CD8-positive, alpha-beta T cell (primary cell): ENCODE measurements at regions of chr7 and their contacts with region 1.

Region 1: GRCh38 chr7:97027427-97028234 is 3.0 kb upstream of the DLX5 start:
- DNase-seq: peak; percentile 42 to 78 (median 65)
- ATAC-seq: peak; percentile 64
- H3K4me3 ChIP-seq: peak overlapping the region; percentile 40 to 51
- H3K4me3 Mint-ChIP-seq: peak overlapping the region; percentile 81
- H3K27ac ChIP-seq: no peak overlapping the region
- H3K27ac Mint-ChIP-seq: no peak overlapping the region
- H3K4me1 ChIP-seq: peaks cover 29% of the 10 kb centered on the region
- H3K4me1 Mint-ChIP-seq: peaks cover 35% of the 10 kb centered on the region
- H3K27me3 ChIP-seq: peaks cover 24 to 40% of the 10 kb centered on the region in 2 experiments
- H3K27me3 Mint-ChIP-seq: peaks cover 62% of the 10 kb centered on the region
- CTCF ChIP-seq: peak; percentile 73

Region 2: GRCh38 chr7:95511716-95512260 is 1515.8 kb before region 1 on chr7:
- CTCF ChIA-PET with region 1: no interaction called
- POLR2A ChIA-PET with region 1: no interaction called
- intact Hi-C with region 1: loop called (anchors 5 kb)
- DNase-seq: peak in 8 of 9 experiments; percentile 13 to 62 (median 32)
- ATAC-seq: peak; percentile 58
- H3K4me3 ChIP-seq: no peak overlapping the region
- H3K4me3 Mint-ChIP-seq: no peak overlapping the region
- H3K27ac ChIP-seq: no peak overlapping the region
- H3K27ac Mint-ChIP-seq: no peak overlapping the region
- H3K4me1 ChIP-seq: no peaks in the 10 kb centered on the region
- H3K4me1 Mint-ChIP-seq: peaks cover 2% of the 10 kb centered on the region
- H3K27me3 ChIP-seq: no peaks in the 10 kb centered on the region
- H3K27me3 Mint-ChIP-seq: peaks cover 3% of the 10 kb centered on the region
- CTCF ChIP-seq: peak; percentile 64

Region 3: DNA sequence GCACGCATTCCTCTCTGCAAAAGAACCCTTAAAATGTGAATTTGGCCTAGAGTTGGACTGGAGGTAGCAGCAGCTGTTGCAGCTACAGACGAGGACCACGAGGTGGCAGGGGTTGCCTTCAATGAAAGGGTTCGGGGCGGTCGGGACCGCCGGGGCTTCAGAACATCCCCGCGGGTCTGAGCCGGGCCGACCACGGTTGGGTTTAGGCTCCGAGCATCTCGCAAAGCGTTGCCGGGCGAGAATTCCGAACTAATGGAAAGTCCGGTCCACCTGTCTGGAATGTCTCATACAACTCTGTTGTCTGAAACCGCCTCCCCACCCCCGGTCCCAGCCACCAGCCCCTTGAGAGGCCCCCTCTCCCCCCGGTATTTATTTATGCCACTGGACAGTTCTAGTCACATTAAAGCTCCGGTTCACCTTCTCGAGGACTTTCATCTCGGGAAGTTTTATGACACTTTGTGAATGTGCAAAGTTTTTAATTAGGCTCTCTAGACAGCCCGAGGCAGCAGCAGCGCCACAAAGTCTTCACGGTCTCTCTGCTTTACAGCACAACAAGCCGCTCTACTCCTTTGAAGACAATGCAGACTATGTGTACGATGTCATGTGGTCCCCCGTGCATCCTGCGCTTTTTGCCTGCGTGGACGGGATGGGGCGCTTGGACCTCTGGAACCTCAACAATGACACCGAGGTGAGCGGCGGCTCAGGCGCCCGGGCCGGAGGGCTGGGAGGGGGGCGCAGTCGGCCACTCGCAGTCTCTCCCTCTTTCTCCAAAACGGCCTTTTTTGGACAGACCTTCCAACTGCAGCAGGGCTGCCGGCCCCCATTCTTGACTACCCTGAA is 951.9 kb before region 1 on chr7:
- CTCF ChIA-PET with region 1: interaction called, 12 read pairs
- POLR2A ChIA-PET with region 1: no interaction called
- intact Hi-C with region 1: loop called in 1 of 2 experiments (anchors 1 kb)
- DNase-seq: peak; percentile 10 to 66 (median 45)
- ATAC-seq: peak; percentile 73
- H3K4me3 ChIP-seq: peak overlapping the region; percentile 43 to 60
- H3K4me3 Mint-ChIP-seq: peak overlapping the region; percentile 86
- H3K27ac ChIP-seq: no peak overlapping the region
- H3K27ac Mint-ChIP-seq: no peak overlapping the region
- H3K4me1 ChIP-seq: peaks cover 9% of the 10 kb centered on the region
- H3K4me1 Mint-ChIP-seq: peaks cover 10% of the 10 kb centered on the region
- H3K27me3 ChIP-seq: peaks cover 5 to 9% of the 10 kb centered on the region in 2 experiments
- H3K27me3 Mint-ChIP-seq: peaks cover 38% of the 10 kb centered on the region
- CTCF ChIP-seq: peak; percentile 74

Region 4: GRCh38 chr7:96224685-96225084 is 802.9 kb before region 1 on chr7:
- CTCF ChIA-PET with region 1: interaction called, 3 read pairs
- POLR2A ChIA-PET with region 1: no interaction called
- intact Hi-C with region 1: loop called in 1 of 2 experiments (anchors 5 kb)
- DNase-seq: peak in 2 of 9 experiments; percentile 10 to 20
- ATAC-seq: no peak
- H3K4me3 ChIP-seq: no peak overlapping the region
- H3K4me3 Mint-ChIP-seq: no peak overlapping the region
- H3K27ac ChIP-seq: no peak overlapping the region
- H3K27ac Mint-ChIP-seq: no peak overlapping the region
- H3K4me1 ChIP-seq: no peaks in the 10 kb centered on the region
- H3K4me1 Mint-ChIP-seq: no peaks in the 10 kb centered on the region
- H3K27me3 ChIP-seq: no peaks in the 10 kb centered on the region
- H3K27me3 Mint-ChIP-seq: no peaks in the 10 kb centered on the region
- CTCF ChIP-seq: no peak

Region 5: DNA sequence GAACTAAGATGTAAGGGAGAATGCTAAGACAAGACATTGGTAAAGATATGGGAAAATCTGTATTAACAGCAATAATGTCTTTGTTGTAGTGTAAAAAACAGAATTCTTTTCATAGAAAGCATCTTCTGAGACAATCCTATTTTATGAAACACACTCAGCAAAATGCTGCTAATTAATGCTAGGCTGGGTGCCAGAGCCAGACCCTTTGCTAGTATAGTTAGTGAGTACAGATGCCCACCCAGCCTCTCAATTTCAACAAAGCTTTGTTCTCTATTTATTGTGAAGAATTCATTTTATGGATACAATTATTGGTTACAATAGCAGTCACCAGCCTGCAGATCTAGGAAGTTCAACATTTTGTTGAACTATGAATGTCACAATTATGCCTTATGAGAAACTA is 449.0 kb before region 1 on chr7:
- CTCF ChIA-PET with region 1: no interaction called
- POLR2A ChIA-PET with region 1: no interaction called
- intact Hi-C with region 1: no loop called
- DNase-seq: no peak
- ATAC-seq: no peak
- H3K4me3 ChIP-seq: no peak overlapping the region
- H3K4me3 Mint-ChIP-seq: no peak overlapping the region
- H3K27ac ChIP-seq: no peak overlapping the region
- H3K27ac Mint-ChIP-seq: no peak overlapping the region
- H3K4me1 ChIP-seq: no peaks in the 10 kb centered on the region
- H3K4me1 Mint-ChIP-seq: no peaks in the 10 kb centered on the region
- H3K27me3 ChIP-seq: no peaks in the 10 kb centered on the region
- H3K27me3 Mint-ChIP-seq: peaks cover 8% of the 10 kb centered on the region
- CTCF ChIP-seq: no peak

Region 6: DNA sequence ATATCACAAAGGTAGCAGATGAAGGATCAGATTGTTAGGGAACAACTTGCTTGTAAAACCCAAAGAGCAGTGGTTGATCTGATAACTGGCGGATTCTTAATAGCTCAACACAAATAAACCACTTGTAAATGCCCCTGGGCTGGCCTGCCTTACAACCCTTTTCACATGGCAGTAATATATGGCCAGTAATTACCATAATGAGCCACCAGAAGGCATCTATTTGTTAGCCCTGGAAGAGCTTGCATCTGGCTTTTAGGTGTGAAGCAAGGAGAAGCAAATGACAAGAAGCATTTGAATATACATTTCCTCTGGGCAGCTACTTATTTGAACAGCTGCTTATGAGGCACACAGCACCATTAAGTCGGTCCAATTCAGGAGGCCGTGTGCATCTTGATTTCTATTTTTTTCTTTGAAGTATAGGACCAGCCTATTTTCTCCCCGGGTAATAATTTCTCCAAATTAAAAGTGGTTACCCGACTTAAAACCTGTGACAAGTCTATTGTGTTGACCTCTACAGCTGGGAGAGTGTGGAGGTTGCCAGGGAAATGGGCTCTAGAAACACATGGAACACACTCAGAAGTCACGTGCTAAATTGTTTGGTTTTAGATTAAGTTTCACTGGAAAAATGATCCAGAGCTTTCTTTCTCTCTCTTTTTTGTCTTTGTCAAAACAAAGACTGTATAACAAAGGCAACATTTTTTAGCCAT is 431.4 kb before region 1 on chr7:
- CTCF ChIA-PET with region 1: no interaction called
- POLR2A ChIA-PET with region 1: no interaction called
- intact Hi-C with region 1: loop called in 1 of 2 experiments (anchors 5 kb)
- DNase-seq: peak in 1 of 9 experiments; percentile 7
- ATAC-seq: no peak
- H3K4me3 ChIP-seq: no peak overlapping the region
- H3K4me3 Mint-ChIP-seq: no peak overlapping the region
- H3K27ac ChIP-seq: no peak overlapping the region
- H3K27ac Mint-ChIP-seq: no peak overlapping the region
- H3K4me1 ChIP-seq: no peaks in the 10 kb centered on the region
- H3K4me1 Mint-ChIP-seq: no peaks in the 10 kb centered on the region
- H3K27me3 ChIP-seq: no peaks in the 10 kb centered on the region
- H3K27me3 Mint-ChIP-seq: peaks cover 15% of the 10 kb centered on the region
- CTCF ChIP-seq: no peak

Region 7: DNA sequence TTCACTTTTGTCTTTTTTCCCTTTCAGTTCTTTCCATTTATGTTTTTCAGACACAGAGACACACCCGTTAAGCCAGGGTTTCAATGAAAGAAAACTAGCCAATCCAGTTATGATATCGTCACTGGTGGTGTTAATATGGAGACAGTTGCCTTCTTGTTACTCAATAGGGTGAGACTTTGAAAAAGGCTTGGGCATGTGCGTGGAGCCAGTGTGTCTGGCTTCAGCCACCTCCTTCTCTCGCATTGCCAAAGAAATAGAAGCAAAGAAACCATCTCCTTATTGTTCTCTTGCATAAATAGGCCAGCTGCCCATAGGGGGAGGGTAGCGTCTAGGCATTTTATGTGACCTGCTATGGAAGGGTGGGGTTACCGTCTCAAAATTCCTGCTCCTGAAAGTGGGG is 106.4 kb before region 1 on chr7:
- CTCF ChIA-PET with region 1: no interaction called
- POLR2A ChIA-PET with region 1: no interaction called
- intact Hi-C with region 1: no loop called
- DNase-seq: no peak
- ATAC-seq: no peak
- H3K4me3 ChIP-seq: no peak overlapping the region
- H3K4me3 Mint-ChIP-seq: no peak overlapping the region
- H3K27ac ChIP-seq: no peak overlapping the region
- H3K27ac Mint-ChIP-seq: no peak overlapping the region
- H3K4me1 ChIP-seq: no peaks in the 10 kb centered on the region
- H3K4me1 Mint-ChIP-seq: no peaks in the 10 kb centered on the region
- H3K27me3 ChIP-seq: peaks cover 0 to 2% of the 10 kb centered on the region in 2 experiments
- H3K27me3 Mint-ChIP-seq: peaks cover 30% of the 10 kb centered on the region
- CTCF ChIP-seq: no peak